Activated T-helper 1 cell treated with anti-CD3 and anti-CD28 coated beads, Interleukin-12 subunit alpha, Interleukin-12 subunit beta, Interleukin-2, Interleukin-4 antibody, amounts not matched to agents 30 ng/mL and 10 ng/mL and 1 ng/mL, durations not matched to agents 14 hours and 24 hours and 36 hours (primary cell): ENCODE measurements at regions of chr2 and their contacts with region 1.

Region 1: GRCh38 chr2:191165176-191165643 is 14.4 kb upstream of the STAT4 start:
- DNase-seq: no peak
- H3K4me3 Mint-ChIP-seq: no peak overlapping the region
- H3K27ac Mint-ChIP-seq: no peak overlapping the region
- H3K4me1 Mint-ChIP-seq: peaks cover 25% of the 10 kb centered on the region
- H3K27me3 Mint-ChIP-seq: peaks cover 2% of the 10 kb centered on the region

Region 2: DNA sequence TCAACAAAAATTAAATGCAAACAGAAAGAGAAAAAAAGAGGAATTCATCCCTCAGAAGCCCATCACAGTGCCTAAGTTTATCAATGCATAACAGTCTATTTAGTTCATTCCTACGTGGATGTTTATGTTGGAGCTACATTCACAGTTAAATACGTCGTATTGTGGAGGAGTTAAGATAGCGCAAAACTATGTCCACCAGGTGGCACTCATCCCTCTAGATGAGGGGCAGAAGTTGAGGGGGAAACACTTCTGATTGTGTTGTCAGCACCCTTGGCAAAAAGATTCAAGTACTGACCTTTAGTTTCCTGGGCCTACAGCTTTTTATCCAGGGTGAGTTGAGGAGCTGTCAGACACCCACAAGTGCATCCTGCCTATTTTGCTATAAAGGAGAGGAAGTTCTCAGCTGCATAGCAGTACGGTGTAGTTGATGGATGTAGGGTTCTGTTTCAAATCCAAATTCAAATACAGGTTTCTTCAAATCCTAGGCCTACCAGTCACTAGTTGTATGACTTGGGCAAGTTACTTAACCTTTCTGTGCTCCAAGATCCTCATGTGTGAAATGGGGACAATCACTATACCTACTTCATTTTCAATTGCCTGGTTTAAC is 53.2 kb after region 1 on chr2:
- intact Hi-C with region 1: loop called (anchors 2 kb)
- DNase-seq: no peak
- H3K4me3 Mint-ChIP-seq: no peak overlapping the region
- H3K27ac Mint-ChIP-seq: no peak overlapping the region
- H3K4me1 Mint-ChIP-seq: peaks cover 29% of the 10 kb centered on the region
- H3K27me3 Mint-ChIP-seq: no peaks in the 10 kb centered on the region

Region 3: GRCh38 chr2:191302459-191303139 is 137.4 kb after region 1 on chr2:
- intact Hi-C with region 1: loop called (anchors 1 kb)
- DNase-seq: no peak
- H3K4me3 Mint-ChIP-seq: no peak overlapping the region
- H3K27ac Mint-ChIP-seq: no peak overlapping the region
- H3K4me1 Mint-ChIP-seq: no peaks in the 10 kb centered on the region
- H3K27me3 Mint-ChIP-seq: no peaks in the 10 kb centered on the region

Region 4: DNA sequence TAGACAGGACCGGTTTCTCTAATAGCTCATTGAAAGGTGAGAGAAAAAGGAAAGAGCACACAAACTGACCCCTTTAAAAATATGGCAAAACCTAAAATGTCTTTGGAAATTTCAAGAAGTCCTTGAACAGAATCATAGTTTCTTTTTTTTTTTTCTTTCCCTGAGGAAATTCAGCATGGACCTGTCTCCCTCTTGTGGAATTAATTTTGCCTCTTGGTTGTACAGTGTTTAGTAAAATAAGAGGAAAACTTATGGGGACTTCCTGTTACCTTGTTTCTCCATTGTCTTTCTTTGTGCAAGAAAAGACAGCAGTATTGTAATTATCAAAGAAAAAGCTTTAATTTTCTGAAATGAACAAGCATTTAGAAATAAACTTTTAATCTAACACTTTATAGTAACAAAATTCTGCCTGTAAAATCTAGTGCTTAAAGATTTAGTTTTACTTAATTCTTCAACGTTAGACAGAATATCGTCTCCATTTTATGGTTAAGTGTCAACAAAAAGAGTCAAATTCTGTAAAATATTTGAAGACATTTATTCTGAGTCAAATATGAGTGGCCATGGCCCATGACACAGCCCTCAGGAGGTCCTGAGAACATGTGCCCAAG is 336.5 kb after region 1 on chr2:
- intact Hi-C with region 1: loop called (anchors 1 kb)
- DNase-seq: no peak
- H3K4me3 Mint-ChIP-seq: no peak overlapping the region
- H3K27ac Mint-ChIP-seq: no peak overlapping the region
- H3K4me1 Mint-ChIP-seq: no peaks in the 10 kb centered on the region
- H3K27me3 Mint-ChIP-seq: no peaks in the 10 kb centered on the region

Region 5: GRCh38 chr2:191691016-191691735 is 526.0 kb after region 1 on chr2:
- intact Hi-C with region 1: loop called (anchors 2 kb)
- DNase-seq: peak; percentile 31
- H3K4me3 Mint-ChIP-seq: no peak overlapping the region
- H3K27ac Mint-ChIP-seq: peak overlapping the region; percentile 67
- H3K4me1 Mint-ChIP-seq: peaks cover 60% of the 10 kb centered on the region
- H3K27me3 Mint-ChIP-seq: no peaks in the 10 kb centered on the region